ENCODE measurements at regions of chr3 and their contacts with region 1.

Region 1: DNA sequence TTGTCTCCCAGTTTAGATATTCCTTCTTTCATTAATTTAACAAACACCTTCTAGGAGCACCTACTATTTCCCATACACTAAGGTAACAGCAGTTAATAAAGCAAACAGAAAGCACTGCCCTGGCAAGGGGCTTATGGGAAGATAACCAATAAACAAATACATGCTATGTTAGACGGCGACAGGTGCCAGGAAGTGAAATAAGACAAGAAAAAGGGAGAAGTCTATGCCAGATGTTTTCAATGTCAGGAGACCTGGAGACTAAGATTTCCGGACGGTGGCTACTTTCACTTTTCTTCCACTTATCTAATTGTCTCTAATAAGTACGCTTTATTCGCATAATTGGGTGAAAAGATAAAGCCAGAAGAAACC is 32.5 kb upstream of the ZNF445 start:
- DNase-seq: no peak
- H3K4me3 ChIP-seq: peak overlapping the region; percentile 96
- H3K27ac ChIP-seq: peak overlapping the region; percentile 89 to 94
- H3K4me1 ChIP-seq: peaks cover 0 to 11% of the 10 kb centered on the region in 2 donors
- H3K27me3 ChIP-seq: no peaks in the 10 kb centered on the region
- CTCF ChIP-seq: no peak

Region 2: DNA sequence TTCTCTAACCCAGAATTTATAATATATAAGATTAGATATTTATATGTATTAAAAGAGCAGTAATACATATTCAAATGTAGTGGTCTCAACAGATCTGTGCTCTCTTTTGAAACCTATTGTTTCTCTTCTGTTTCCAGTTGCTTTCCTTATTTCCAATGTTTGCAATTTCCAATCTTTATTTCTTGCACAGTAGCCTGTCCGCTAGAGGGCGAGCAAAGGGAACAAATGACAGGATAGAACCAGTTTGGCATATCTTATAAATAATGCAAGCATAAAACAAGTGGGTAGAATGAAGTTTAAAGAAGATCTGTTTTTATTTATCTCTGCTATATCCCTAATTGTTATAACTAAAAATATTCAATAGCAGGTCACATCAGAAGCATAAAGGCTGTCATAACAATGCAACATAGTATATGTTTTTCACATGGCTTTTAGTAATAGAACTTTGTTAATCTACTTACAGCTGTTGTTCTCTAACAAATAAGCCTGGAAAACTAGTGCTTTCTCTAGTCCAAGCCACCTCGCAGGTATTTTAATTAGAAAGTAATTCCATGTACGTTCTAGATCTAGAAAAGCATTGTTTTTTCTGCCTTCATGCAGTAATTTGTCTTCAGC is 186.5 kb before region 1 on chr3:
- intact Hi-C with region 1: loop called (anchors 2 kb)
- DNase-seq: peak in 1 of 2 donors; percentile 84
- H3K4me3 ChIP-seq: no peak overlapping the region
- H3K27ac ChIP-seq: no peak overlapping the region
- H3K4me1 ChIP-seq: no peaks in the 10 kb centered on the region
- H3K27me3 ChIP-seq: no peaks in the 10 kb centered on the region
- CTCF ChIP-seq: peak; percentile 47 to 88 (median 77)

Region 3: GRCh38 chr3:44439499-44440295 is 70.3 kb before region 1 on chr3:
- intact Hi-C with region 1: no loop called
- DNase-seq: peak; percentile 62 to 90
- H3K4me3 ChIP-seq: peak overlapping the region in 1 of 2 donors; percentile 37
- H3K27ac ChIP-seq: peak overlapping the region; percentile 78 to 87
- H3K4me1 ChIP-seq: peaks cover 4 to 14% of the 10 kb centered on the region in 2 donors
- H3K27me3 ChIP-seq: no peaks in the 10 kb centered on the region
- CTCF ChIP-seq: no peak

Region 4: GRCh38 chr3:44477312-44478030 is 32.5 kb before region 1 on chr3 and contains the start of gene ZNF445:
- intact Hi-C with region 1: loop called (anchors 1 kb)
- DNase-seq: peak; percentile 14 to 90
- H3K4me3 ChIP-seq: peak within 1 kb of the TSS; percentile 74 to 90
- H3K27ac ChIP-seq: peak within 1 kb of the TSS; percentile 42 to 68
- H3K4me1 ChIP-seq: peaks cover 0 to 13% of the 10 kb centered on the region in 2 donors
- H3K27me3 ChIP-seq: no peaks in the 10 kb centered on the region
- CTCF ChIP-seq: no peak
- total RNA-seq, gene ZNF445: 6.6 TPM

Region 5: GRCh38 chr3:44861412-44862220 is 351.6 kb after region 1 on chr3 and contains the start of gene TMEM42:
- intact Hi-C with region 1: loop called (anchors 1 kb)
- DNase-seq: peak; percentile 55 to 95
- H3K4me3 ChIP-seq: peak within 1 kb of the TSS; percentile 67 to 89
- H3K27ac ChIP-seq: peak within 1 kb of the TSS; percentile 91 to 96
- H3K4me1 ChIP-seq: peaks cover 0 to 11% of the 10 kb centered on the region in 2 donors
- H3K27me3 ChIP-seq: no peaks in the 10 kb centered on the region
- CTCF ChIP-seq: peak in 2 of 3 experiments; percentile 4 to 40
- total RNA-seq, gene TMEM42: not detected